ENCODE measurements at regions of chr6 and their contacts with region 1.

Region 1: DNA sequence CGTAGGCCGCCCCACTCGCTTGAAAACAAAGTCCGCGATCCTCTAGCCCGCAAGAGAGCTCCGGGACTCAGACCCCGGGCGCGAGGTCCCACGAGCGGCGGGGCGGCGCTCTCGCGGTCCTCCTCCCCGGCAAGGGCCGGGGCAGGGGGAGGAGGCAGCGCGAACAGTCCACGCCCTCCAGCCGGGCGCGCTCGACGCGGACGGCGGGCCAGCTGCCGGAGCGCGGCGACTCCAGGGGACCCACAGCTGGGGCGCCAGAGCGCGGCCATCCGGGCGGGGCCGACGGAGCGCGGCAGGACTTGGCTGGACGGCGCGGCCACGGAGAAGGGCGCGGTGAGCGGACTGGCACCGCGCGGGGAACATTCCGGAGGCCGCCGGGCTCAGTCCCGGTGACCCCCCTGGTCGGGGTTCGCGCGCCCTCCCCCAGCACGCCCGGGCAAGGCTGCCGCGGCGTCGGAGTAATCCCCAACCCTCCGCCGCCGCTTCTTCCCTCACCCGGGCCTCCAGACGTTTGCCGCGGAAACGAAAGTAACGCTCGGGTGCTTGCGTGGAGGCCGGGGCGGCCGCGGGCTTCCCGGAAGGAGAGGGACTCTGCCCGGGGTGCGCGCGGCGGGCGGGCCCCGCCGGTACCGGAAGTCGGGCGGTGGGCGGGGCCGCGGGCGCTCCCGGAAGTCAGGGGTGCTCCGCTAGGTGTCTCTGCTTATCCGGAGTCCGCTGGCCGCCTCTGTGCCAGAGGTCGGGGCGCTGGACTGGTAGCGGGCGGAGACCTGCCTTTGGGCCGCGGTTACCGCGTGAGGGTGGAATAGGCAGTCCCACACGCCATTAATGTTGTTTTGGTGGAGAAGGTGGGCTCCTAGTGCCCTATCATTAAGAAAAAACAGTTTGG is at the start of gene RIPK1:
- DNase-seq: peak; percentile 96
- H3K4me3 Mint-ChIP-seq: peak within 1 kb of the TSS; percentile 93
- H3K27ac Mint-ChIP-seq: peak within 1 kb of the TSS; percentile 96
- H3K4me1 Mint-ChIP-seq: peaks cover 58% of the 10 kb centered on the region
- H3K27me3 Mint-ChIP-seq: no peaks in the 10 kb centered on the region
- total RNA-seq, gene RIPK1: 17.1 and 19.4 TPM in 2 replicates

Region 2: DNA sequence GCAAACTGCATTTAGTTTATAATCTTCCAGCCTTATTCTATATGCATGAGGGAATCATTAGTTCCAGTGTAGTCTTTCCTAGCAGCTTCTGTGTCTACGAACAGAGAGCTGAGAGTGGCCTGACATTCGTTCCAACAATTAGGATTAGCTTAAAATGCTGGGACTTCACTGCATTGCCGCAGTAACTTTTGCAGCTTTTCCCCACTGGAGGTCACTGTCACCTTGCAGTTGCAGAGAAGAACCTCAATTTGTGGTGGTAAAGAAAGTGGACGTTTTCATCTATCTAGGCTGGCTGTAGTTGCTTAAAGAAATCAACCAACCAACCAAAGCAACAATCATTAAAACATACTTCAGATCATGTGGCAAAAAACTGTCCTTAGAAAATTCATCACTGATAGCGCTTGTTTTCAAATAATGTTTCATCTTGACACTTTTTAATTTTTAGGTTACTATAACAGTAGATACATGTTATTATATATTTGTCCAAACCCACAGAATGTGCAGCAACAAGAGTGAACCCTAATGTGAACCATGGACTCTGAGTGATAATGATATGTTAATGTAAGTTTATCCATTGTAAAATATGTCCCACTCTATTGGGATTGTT is 330.1 kb before region 1 on chr6:
- intact Hi-C with region 1: no loop called
- DNase-seq: no peak
- H3K4me3 Mint-ChIP-seq: no peak overlapping the region
- H3K27ac Mint-ChIP-seq: no peak overlapping the region
- H3K4me1 Mint-ChIP-seq: peaks cover 5% of the 10 kb centered on the region
- H3K27me3 Mint-ChIP-seq: peaks cover 15% of the 10 kb centered on the region

Region 3: DNA sequence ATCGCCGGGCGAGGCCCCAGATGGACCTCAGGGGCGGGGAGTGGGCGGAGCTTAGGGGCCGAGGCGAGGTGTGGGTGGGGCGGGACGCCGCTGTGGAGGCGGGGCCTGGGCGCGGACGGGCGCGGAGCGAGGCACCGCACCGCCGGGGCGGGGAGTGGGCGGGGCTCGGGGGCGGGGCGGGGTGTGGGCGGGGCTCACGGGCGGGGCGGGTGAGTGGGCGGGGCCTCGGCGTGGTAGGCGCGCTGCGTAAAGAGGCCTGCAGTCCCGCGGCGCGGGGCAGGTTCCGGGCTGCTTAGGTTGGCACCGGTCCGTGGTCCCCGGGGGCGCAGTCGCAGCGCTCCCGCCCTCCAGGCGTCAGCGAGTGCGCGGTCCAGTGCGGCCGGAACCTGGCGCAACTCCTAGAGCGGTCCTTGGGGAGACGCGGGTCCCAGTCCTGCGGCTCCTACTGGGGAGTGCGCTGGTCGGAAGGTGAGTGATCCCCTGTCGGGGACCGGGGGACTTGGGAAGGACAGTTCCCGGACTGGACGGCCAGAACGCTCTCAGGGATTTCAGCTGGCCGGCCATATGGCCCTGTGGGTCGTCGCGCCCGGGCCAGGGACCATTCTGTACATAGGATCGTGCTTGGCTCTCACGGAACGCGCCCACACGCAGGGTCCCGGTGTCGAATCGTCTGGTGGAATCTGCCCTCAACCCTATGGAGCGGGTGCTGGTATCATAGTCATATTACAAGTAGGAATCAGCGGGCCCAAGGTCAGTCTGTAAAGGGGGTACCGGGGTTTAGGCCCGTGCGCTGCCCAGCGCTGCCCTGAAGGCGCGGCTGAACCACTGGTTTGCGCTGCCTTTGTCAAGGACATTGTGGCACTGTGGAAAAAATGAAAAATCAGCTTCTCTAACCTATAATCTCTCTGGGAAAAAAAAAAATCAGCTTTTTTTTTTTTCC is 68.7 kb before region 1 on chr6 and contains the start of gene NQO2:
- intact Hi-C with region 1: loop called (anchors 1 kb)
- DNase-seq: peak; percentile 83
- H3K4me3 Mint-ChIP-seq: peak within 1 kb of the TSS; percentile 90
- H3K27ac Mint-ChIP-seq: peak within 1 kb of the TSS; percentile 90
- H3K4me1 Mint-ChIP-seq: peaks cover 38% of the 10 kb centered on the region
- H3K27me3 Mint-ChIP-seq: peaks cover 3% of the 10 kb centered on the region
- total RNA-seq, gene NQO2: 30.2 and 34.8 TPM in 2 replicates

Region 4: GRCh38 chr6:3052481-3053230 is 15.9 kb before region 1 on chr6:
- intact Hi-C with region 1: loop called (anchors 1 kb)
- DNase-seq: no peak
- H3K4me3 Mint-ChIP-seq: peak overlapping the region; percentile 60
- H3K27ac Mint-ChIP-seq: peak overlapping the region; percentile 56
- H3K4me1 Mint-ChIP-seq: peaks cover 30% of the 10 kb centered on the region
- H3K27me3 Mint-ChIP-seq: peaks cover 25% of the 10 kb centered on the region

Region 5: DNA sequence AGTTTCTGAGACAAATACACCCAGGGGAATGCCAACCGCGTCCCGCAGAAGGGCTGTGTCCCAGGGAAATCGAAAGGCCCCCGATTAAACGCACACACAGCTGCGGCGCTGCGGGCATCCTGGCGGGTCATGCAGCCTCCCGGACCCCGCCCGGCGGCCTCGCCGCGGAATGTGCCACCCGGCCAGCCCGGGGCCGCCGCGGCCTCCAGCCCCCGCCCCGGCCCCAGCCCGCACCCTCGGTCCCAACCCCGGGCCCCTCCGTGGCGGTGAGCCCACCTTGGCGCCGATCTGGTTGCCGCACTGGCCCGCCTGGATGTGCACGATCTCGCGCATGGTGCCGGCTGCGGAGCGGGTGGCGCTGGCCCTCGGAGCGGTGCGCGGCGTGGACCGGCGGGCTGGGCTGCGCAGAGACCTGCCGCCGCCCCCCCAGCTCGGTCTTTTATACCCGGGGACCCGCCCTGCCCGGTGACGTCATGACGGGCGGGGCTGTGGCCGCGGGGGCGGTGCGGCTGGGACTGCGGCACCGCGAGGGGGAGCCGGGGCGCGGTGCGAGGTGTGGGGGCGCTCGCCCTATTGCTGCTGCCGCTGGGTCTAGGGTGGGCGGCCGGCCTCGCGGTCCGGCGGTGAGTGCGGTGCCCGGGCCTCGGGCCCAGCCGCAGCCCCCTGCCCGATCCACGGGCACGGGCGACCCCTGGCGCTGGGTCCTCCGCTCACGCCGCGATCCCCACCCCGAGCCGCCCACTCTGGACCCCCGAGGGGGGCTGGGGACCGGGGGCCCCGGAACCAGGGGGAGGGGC is 88.8 kb after region 1 on chr6 and contains the start of gene TUBB2A:
- intact Hi-C with region 1: loop called (anchors 2 kb)
- DNase-seq: peak; percentile 83
- H3K4me3 Mint-ChIP-seq: peak within 1 kb of the TSS; percentile 86
- H3K27ac Mint-ChIP-seq: peak within 1 kb of the TSS; percentile 76
- H3K4me1 Mint-ChIP-seq: peaks cover 22% of the 10 kb centered on the region
- H3K27me3 Mint-ChIP-seq: peaks cover 54% of the 10 kb centered on the region
- total RNA-seq, gene TUBB2A: 5.2 and 5.6 TPM in 2 replicates

Region 6: GRCh38 chr6:3258720-3259490 is 190.3 kb after region 1 on chr6 and contains the start of gene PSMG4:
- intact Hi-C with region 1: loop called (anchors 1 kb)
- DNase-seq: peak; percentile 91
- H3K4me3 Mint-ChIP-seq: peak within 1 kb of the TSS; percentile 99
- H3K27ac Mint-ChIP-seq: peak within 1 kb of the TSS; percentile 95
- H3K4me1 Mint-ChIP-seq: peaks cover 39% of the 10 kb centered on the region
- H3K27me3 Mint-ChIP-seq: peaks cover 11% of the 10 kb centered on the region
- total RNA-seq, gene PSMG4: 32.1 and 35.4 TPM in 2 replicates

Region 7: GRCh38 chr6:3455569-3456394 is 387.2 kb after region 1 on chr6:
- intact Hi-C with region 1: no loop called
- DNase-seq: no peak
- H3K4me3 Mint-ChIP-seq: no peak overlapping the region
- H3K27ac Mint-ChIP-seq: no peak overlapping the region
- H3K4me1 Mint-ChIP-seq: peaks cover 7% of the 10 kb centered on the region
- H3K27me3 Mint-ChIP-seq: peaks cover 41% of the 10 kb centered on the region

Measured in activated T-helper 1 cell treated with anti-CD3 and anti-CD28 coated beads, Interleukin-12 subunit alpha, Interleukin-12 subunit beta, Interleukin-2, Interleukin-4 antibody, amounts not matched to agents 30 ng/mL and 10 ng/mL and 1 ng/mL, durations not matched to agents 14 hours and 24 hours and 36 hours (primary cell).